ENCODE measurements at regions of chr10 and their contacts with region 1.

Region 1: GRCh38 chr10:111360260-111360925 is 283.6 kb downstream of the ADRA2A start:
- DNase-seq: peak in 3 of 5 donors; percentile 6 to 32 (median 21)
- ATAC-seq: peak; percentile 73 to 91 (median 88)
- H3K4me3 ChIP-seq: no peak overlapping the region
- H3K27ac ChIP-seq: no peak overlapping the region
- H3K4me1 ChIP-seq: no peaks in the 10 kb centered on the region
- H3K27me3 ChIP-seq: peaks cover 0 to 5% (median 0%) of the 10 kb centered on the region in 9 donors
- CTCF ChIP-seq: peak in 11 of 12 donors; percentile 29 to 62 (median 45)
- POLR2A ChIP-seq: no peak

Region 2: GRCh38 chr10:110556969-110557601 is 803.3 kb before region 1 on chr10:
- intact Hi-C with region 1: loop called in 1 of 10 experiments (anchors 5 kb)
- DNase-seq: peak in 1 of 5 donors; percentile 51
- ATAC-seq: peak in 2 of 4 donors; percentile 50 to 58
- H3K4me3 ChIP-seq: no peak overlapping the region
- H3K27ac ChIP-seq: no peak overlapping the region
- H3K4me1 ChIP-seq: no peaks in the 10 kb centered on the region
- H3K27me3 ChIP-seq: peaks cover 0 to 4% (median 0%) of the 10 kb centered on the region in 9 donors
- CTCF ChIP-seq: peak; percentile 51 to 80 (median 66)
- POLR2A ChIP-seq: no peak

Measured in heart left ventricle (tissue), 16 donors.